AG04449 (cell line): ENCODE measurements at regions of chr16 and their contacts with region 1.

Region 1: DNA sequence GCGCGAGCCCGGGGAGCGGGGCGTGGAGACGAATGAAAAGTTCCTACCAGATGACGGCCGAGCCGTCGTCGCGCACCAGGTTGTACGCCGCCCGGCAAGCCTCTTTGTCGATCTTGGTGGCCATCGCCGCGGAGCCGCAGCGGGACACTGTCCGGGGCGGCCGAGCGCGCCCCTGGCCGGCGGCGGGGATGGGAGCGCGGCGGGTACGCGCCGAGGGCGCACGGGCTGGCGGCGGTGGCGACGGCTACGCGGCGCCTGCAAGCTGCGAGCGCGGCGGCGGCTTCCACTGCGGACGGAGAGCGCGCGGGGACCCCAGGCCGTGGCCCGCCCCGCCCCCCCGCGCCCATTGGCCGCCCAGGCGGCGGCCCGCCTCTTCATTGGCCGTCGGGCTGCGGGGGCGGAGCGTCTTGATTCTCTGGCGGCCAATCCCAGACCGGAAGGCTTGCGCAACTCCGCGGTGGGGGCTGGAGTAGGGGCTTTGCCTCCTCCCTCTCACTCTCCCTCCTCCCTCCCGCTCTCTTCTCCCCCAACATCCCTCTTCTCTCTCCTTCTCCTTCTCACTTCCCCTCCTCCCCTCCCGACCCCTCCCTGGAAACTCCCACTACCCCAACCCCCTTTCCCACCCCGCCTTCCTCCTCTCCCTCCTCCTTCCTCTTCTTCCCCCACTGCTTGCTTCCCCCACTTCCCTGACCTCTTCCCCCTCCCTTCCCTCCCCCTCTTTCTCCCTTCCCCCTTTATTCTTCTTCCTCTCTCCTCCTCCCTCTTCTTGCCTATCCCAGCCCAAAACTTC is at the start of gene COTL1:
- DNase-seq: peak; percentile 90
- H3K4me3 ChIP-seq: peak within 1 kb of the TSS; percentile 65
- CTCF ChIP-seq: no peak

Region 2: GRCh38 chr16:83233153-83233552 is 1384.8 kb before region 1 on chr16:
- CTCF ChIA-PET with region 1: no interaction called
- POLR2A ChIA-PET with region 1: no interaction called
- DNase-seq: no peak
- H3K4me3 ChIP-seq: no peak overlapping the region
- CTCF ChIP-seq: no peak

Region 3: DNA sequence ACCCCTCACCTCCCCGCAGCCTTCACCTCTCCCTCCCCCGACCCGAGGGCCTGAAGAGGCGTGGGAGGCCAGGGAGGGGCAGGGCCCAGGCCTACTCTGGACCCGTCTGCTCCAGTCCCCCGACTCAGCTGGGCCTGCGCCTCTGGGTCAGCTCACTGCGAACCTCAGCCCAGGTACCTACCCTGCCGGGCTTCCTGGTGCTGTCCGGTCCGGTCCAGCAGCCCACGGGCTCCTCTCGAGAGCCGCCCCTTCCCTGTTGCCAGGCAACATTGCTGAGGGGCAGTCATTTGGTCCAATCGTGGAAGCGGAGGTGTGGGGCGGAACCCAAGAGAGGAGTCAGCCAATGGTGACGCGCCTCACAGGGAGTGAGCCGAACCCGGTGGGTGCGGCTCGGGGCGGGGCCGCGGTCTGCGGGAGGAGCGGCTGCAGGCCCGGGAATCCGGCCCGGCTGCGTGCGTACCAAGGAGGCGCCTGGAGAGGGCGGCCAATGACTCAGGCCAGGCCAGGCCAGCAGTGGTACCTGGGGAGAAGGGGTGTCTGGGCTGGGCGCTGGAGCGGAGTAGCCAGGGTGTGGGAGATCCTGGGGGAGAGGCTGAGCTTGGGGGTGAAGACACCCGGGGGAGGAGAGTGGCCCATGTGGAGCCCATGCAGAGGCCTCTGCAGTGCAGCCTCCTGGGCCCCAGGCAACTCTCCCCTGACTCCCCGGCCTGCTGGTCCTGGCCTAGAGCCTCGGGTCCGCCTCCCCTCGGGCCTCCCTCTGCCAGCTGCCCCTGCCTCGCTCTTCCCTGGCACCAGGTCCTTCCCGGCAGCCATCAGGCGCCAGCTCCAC is 113.4 kb before region 1 on chr16 and contains the start of gene MEAK7:
- CTCF ChIA-PET with region 1: interaction called, 446 read pairs
- POLR2A ChIA-PET with region 1: interaction called, 8 read pairs
- DNase-seq: peak; percentile 77
- H3K4me3 ChIP-seq: peak within 1 kb of the TSS; percentile 100
- CTCF ChIP-seq: peak; percentile 39

Region 4: DNA sequence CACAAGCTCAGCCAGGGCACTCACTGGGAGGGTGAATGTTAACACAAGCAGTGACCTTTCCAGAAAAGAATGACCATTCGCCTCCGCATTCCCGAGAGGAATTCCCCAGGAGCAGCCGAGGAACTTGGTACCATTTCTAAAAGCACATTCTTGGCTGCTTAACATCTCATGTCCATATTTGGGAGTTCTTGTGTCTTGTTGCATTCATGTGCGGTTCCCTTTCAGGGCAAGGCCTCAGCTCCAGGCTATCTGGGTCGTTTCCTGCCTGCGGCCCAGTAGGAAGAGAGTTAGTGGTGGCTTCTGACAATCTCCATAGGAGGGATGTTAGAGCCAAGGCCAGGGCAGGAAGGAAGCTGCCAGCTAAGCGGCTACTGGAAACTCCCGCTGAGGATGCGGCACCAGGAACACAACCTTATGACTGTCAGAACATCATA is 85.7 kb before region 1 on chr16:
- CTCF ChIA-PET with region 1: interaction called, 25 read pairs
- POLR2A ChIA-PET with region 1: interaction called, 23 read pairs
- DNase-seq: peak; percentile 92
- H3K4me3 ChIP-seq: no peak overlapping the region
- CTCF ChIP-seq: no peak

Region 5: GRCh38 chr16:84606081-84606875 is 11.7 kb before region 1 on chr16:
- CTCF ChIA-PET with region 1: interaction called, 12 read pairs
- POLR2A ChIA-PET with region 1: interaction called, 61 read pairs
- DNase-seq: no peak
- H3K4me3 ChIP-seq: no peak overlapping the region
- CTCF ChIP-seq: no peak

Region 6: GRCh38 chr16:84720177-84720579 is 102.2 kb after region 1 on chr16:
- CTCF ChIA-PET with region 1: interaction called, 185 read pairs
- POLR2A ChIA-PET with region 1: no interaction called
- DNase-seq: no peak
- H3K4me3 ChIP-seq: no peak overlapping the region
- CTCF ChIP-seq: no peak

Region 7: GRCh38 chr16:84952335-84953189 is 334.6 kb after region 1 on chr16:
- CTCF ChIA-PET with region 1: interaction called, 20 read pairs
- POLR2A ChIA-PET with region 1: no interaction called
- DNase-seq: no peak
- H3K4me3 ChIP-seq: no peak overlapping the region
- CTCF ChIP-seq: peak; percentile 86